ENCODE measurements at regions of chr19 and their contacts with region 1.

Region 1: GRCh38 chr19:53365134-53365898 is at the start of gene ZNF525:
- DNase-seq: peak; percentile 90
- H3K4me3 Mint-ChIP-seq: peak within 1 kb of the TSS; percentile 88
- H3K27ac Mint-ChIP-seq: peak within 1 kb of the TSS; percentile 70
- H3K4me1 Mint-ChIP-seq: peaks cover 9% of the 10 kb centered on the region
- H3K27me3 Mint-ChIP-seq: no peaks in the 10 kb centered on the region
- CTCF ChIP-seq: peak; percentile 35
- total RNA-seq, gene ZNF525: 9.5 and 11.2 TPM in 2 replicates

Region 2: GRCh38 chr19:53394974-53395839 is 29.9 kb after region 1 on chr19 and contains the start of gene ZNF765:
- CTCF ChIA-PET with region 1: interaction called, 3 read pairs
- POLR2A ChIA-PET with region 1: interaction called, 4 read pairs
- intact Hi-C with region 1: loop called (anchors 2 kb)
- DNase-seq: peak; percentile 94
- H3K4me3 Mint-ChIP-seq: peak within 1 kb of the TSS; percentile 79
- H3K27ac Mint-ChIP-seq: peak within 1 kb of the TSS; percentile 79
- H3K4me1 Mint-ChIP-seq: peaks cover 9% of the 10 kb centered on the region
- H3K27me3 Mint-ChIP-seq: no peaks in the 10 kb centered on the region
- CTCF ChIP-seq: peak; percentile 49
- total RNA-seq, gene ZNF765: 5.0 and 5.2 TPM in 2 replicates

Region 3: GRCh38 chr19:53462861-53463260 is 97.5 kb after region 1 on chr19:
- CTCF ChIA-PET with region 1: no interaction called
- POLR2A ChIA-PET with region 1: no interaction called
- intact Hi-C with region 1: no loop called
- DNase-seq: no peak
- H3K4me3 Mint-ChIP-seq: no peak overlapping the region
- H3K27ac Mint-ChIP-seq: no peak overlapping the region
- H3K4me1 Mint-ChIP-seq: no peaks in the 10 kb centered on the region
- H3K27me3 Mint-ChIP-seq: no peaks in the 10 kb centered on the region
- CTCF ChIP-seq: no peak